Common myeloid progenitor, CD34-positive (primary cell): ENCODE measurements at regions of chr17 and their contacts with region 1.

Region 1: GRCh38 chr17:49567871-49568694 is 7.6 kb upstream of the NXPH3 start:
- DNase-seq: peak; percentile 69 to 83 (median 82)
- H3K4me3 ChIP-seq: peak overlapping the region in 6 of 7 experiments; percentile 36 to 82 (median 62)
- H3K27ac ChIP-seq: no peak overlapping the region
- H3K4me1 ChIP-seq: peaks cover 0 to 30% (median 23%) of the 10 kb centered on the region in 4 experiments
- H3K27me3 ChIP-seq: peaks cover 0 to 14% (median 7%) of the 10 kb centered on the region in 5 experiments

Region 2: GRCh38 chr17:49407981-49408501 is 160.0 kb before region 1 on chr17:
- CTCF ChIA-PET with region 1: interaction called, 12 read pairs
- POLR2A ChIA-PET with region 1: no interaction called
- DNase-seq: peak; percentile 82 to 91 (median 88)
- H3K4me3 ChIP-seq: peak overlapping the region in 1 of 7 experiments; percentile 14
- H3K27ac ChIP-seq: peak overlapping the region in 1 of 2 experiments; percentile 2
- H3K4me1 ChIP-seq: peaks cover 5 to 62% (median 57%) of the 10 kb centered on the region in 4 experiments
- H3K27me3 ChIP-seq: no peaks in the 10 kb centered on the region